WTC11 (cell line): ENCODE measurements at regions of chr9 and their contacts with region 1.

Region 1: DNA sequence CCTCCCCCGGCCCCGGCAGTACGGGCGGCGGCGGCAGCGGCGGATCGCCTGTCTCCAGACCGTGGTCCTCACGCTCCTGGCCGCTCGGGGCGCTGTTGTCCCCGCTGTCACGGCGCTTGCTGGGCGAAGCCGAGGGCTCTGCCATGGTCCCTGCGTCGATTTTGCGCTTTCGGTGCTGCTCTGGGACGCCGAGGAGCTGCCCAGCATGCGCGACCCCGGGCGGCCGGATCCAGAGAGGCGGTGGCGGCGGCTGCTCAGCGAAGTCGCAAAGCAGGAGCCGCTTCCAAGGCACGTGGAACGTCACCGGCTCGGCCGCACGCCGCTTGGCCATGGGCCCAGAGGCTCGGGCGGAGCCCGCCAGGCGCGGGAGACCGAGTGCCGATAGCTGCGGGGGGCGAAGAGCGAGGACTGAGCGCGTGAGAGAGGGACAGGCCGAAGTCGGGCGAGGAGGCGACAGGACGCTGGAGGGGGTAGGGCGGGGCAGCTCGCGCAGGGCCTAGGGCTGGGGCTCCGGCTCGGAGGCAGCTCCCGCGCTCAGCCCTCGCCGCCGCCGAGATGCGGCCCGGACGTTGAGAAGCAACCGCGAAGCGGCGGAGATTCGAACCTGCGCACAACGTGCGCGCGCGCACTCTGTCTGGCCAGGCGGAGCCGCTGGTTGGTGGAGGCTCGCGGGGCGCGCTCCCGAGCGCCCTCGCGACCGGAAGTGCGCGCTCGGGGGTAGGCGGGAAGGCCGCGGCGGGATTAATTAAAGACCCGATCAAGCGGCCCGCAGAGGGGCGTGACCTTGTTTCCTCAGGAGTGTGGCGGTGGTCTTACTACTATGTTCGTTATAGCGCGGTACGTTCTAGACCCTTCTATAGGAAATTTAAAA is at the start of gene C9orf40:
- DNase-seq: peak; percentile 93
- ATAC-seq: peak; percentile 90
- H3K4me3 Mint-ChIP-seq: peak within 1 kb of the TSS; percentile 96
- H3K27ac Mint-ChIP-seq: peak within 1 kb of the TSS; percentile 85
- H3K4me1 Mint-ChIP-seq: peaks cover 27% of the 10 kb centered on the region
- H3K27me3 Mint-ChIP-seq: no peaks in the 10 kb centered on the region
- CTCF ChIP-seq: peak; percentile 78
- total RNA-seq, gene C9orf40: 10.3 to 15.5 TPM (median 14.1 TPM) in 3 replicates

Region 2: GRCh38 chr9:74773886-74774479 is 178.5 kb before region 1 on chr9:
- CTCF ChIA-PET with region 1: interaction called, 21 read pairs
- POLR2A ChIA-PET with region 1: interaction called, 4 read pairs
- DNase-seq: peak; percentile 78
- ATAC-seq: peak; percentile 42
- H3K4me3 Mint-ChIP-seq: no peak overlapping the region
- H3K27ac Mint-ChIP-seq: no peak overlapping the region
- H3K4me1 Mint-ChIP-seq: peaks cover 4% of the 10 kb centered on the region
- H3K27me3 Mint-ChIP-seq: no peaks in the 10 kb centered on the region; the same call in none of the 2 replicates
- CTCF ChIP-seq: peak; percentile 76

Region 3: GRCh38 chr9:74887041-74887980 is 65.2 kb before region 1 on chr9 and contains the start of gene TRPM6:
- CTCF ChIA-PET with region 1: interaction called, 17 read pairs
- POLR2A ChIA-PET with region 1: no interaction called
- DNase-seq: peak; percentile 68
- ATAC-seq: peak; percentile 81
- H3K4me3 Mint-ChIP-seq: peak within 1 kb of the TSS; percentile 90
- H3K27ac Mint-ChIP-seq: no peak within 1 kb of the TSS
- H3K4me1 Mint-ChIP-seq: peaks cover 8% of the 10 kb centered on the region
- H3K27me3 Mint-ChIP-seq: peaks cover 13% of the 10 kb centered on the region
- CTCF ChIP-seq: no peak
- total RNA-seq, gene TRPM6: 0.66 to 1.4 TPM (median 0.78 TPM) in 3 replicates

Region 4: GRCh38 chr9:75027187-75028107 is 74.9 kb after region 1 on chr9:
- CTCF ChIA-PET with region 1: interaction called, 19 read pairs
- POLR2A ChIA-PET with region 1: interaction called, 6 read pairs
- DNase-seq: peak; percentile 54
- ATAC-seq: peak; percentile 20
- H3K4me3 Mint-ChIP-seq: peak overlapping the region; percentile 91
- H3K27ac Mint-ChIP-seq: peak overlapping the region; percentile 96
- H3K4me1 Mint-ChIP-seq: peaks cover 25% of the 10 kb centered on the region
- H3K27me3 Mint-ChIP-seq: no peaks in the 10 kb centered on the region
- CTCF ChIP-seq: no peak

Region 5: DNA sequence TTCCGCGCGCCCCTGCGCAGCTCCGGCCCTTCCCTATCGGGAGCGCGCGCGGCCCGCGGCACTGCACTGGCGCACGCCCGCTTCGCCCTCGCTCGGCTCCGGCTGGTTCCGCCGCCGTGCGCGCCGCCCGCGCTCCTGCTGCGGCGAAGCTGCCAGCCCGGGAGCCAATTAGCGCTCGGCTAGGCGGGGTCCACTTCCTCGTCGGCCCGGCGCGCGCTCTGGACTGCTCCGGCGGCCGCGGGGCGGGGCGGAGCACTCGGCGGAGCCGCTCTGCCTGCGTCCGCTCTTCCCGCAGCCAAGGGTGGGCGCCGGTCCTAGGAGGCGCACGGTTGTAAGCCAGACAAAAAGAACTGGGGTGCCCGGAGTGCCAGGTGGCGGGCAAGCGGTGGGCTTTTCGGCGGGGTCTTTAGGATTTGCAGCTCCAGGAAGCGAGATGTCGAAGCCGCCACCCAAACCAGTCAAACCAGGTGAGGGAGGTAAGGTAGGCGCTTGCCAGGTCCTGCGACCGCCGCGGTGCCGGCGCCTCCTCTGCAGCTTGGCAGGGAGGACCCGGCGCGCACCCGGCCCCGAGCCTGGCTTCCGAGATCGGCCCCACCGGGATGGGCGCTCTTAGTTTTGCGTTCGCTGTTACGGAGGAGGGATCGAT is 135.9 kb after region 1 on chr9 and contains the start of gene OSTF1:
- CTCF ChIA-PET with region 1: interaction called, 26 read pairs
- POLR2A ChIA-PET with region 1: no interaction called
- DNase-seq: peak; percentile 94
- ATAC-seq: peak; percentile 86
- H3K4me3 Mint-ChIP-seq: peak within 1 kb of the TSS; percentile 100
- H3K27ac Mint-ChIP-seq: peak within 1 kb of the TSS; percentile 98
- H3K4me1 Mint-ChIP-seq: peaks cover 64% of the 10 kb centered on the region
- H3K27me3 Mint-ChIP-seq: no peaks in the 10 kb centered on the region; the same call in 1 of the 2 replicates
- CTCF ChIP-seq: no peak
- total RNA-seq, gene OSTF1: 15.0 to 17.8 TPM (median 16.1 TPM) in 3 replicates